ENCODE measurements at regions of chr19 and their contacts with region 1.

Region 1: GRCh38 chr19:55632463-55632834 is 8.1 kb upstream of the ZNF784 start:
- DNase-seq: peak; percentile 88
- ATAC-seq: peak; percentile 63
- H3K4me3 ChIP-seq: no peak overlapping the region
- H3K27ac ChIP-seq: no peak overlapping the region
- H3K4me1 ChIP-seq: peaks cover 38% of the 10 kb centered on the region
- H3K27me3 ChIP-seq: no peaks in the 10 kb centered on the region; a peak in 1 of 5 replicates
- CTCF ChIP-seq: peak; percentile 85
- EP300 ChIP-seq: no peak
- POLR2A ChIP-seq: no peak
- RAD21 ChIP-seq: no peak; the same call in 1 of the 2 replicates

Region 2: DNA sequence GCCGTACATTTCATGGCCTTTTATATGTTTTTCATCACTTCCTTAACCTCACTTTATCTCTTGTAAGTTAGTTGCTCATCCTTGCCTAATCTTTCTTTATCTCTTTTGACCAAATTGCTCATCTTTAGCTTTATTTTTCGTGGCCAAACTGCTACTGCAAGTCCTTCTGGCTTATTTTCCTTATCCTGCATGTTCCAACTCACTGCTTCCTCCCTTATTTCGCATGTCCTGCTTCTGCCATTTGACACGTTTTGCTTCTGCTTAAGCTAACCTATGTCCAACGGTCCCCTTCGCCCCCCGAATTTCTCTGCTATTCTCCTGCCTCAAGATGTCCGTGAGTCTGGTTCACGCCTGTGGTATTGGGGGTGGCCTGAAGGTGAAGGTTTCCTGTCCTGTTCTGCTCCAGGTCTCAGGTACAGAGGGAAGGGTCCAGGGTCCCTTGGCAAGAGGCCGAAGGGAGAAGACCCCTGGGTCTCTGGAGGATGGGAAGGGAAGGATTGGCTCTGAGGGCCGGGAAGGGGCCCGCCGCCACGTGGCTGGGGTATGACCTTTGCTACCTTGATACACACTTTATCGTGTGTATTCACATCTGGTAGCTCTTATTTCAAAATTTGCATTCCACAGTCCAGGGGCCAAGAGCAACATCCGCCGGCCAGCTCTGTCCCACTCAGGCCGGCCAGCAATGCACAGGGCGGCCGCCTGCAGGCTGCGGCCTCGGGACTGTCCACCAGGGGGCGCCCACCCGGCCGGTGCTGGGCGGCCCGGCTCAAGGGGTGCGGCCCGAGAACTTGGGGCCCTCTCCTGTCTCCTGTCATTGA is 165.0 kb before region 1 on chr19:
- CTCF ChIA-PET with region 1: no interaction called
- POLR2A ChIA-PET with region 1: no interaction called
- in situ Hi-C with region 1: no loop called
- intact Hi-C with region 1: loop called (anchors 1 kb)
- DNase-seq: peak; percentile 69
- ATAC-seq: peak; percentile 89
- H3K4me3 ChIP-seq: peak overlapping the region in 1 of 3 experiments; percentile 44; a peak in 1 of 6 replicates
- H3K27ac ChIP-seq: peak overlapping the region; percentile 52
- H3K4me1 ChIP-seq: peaks cover 52% of the 10 kb centered on the region
- H3K27me3 ChIP-seq: no peaks in the 10 kb centered on the region; a peak in 1 of 5 replicates
- CTCF ChIP-seq: peak; percentile 88
- EP300 ChIP-seq: peak in 1 of 2 experiments; percentile 12; a peak in 1 of 4 replicates
- POLR2A ChIP-seq: no peak
- RAD21 ChIP-seq: peak; percentile 79

Region 3: DNA sequence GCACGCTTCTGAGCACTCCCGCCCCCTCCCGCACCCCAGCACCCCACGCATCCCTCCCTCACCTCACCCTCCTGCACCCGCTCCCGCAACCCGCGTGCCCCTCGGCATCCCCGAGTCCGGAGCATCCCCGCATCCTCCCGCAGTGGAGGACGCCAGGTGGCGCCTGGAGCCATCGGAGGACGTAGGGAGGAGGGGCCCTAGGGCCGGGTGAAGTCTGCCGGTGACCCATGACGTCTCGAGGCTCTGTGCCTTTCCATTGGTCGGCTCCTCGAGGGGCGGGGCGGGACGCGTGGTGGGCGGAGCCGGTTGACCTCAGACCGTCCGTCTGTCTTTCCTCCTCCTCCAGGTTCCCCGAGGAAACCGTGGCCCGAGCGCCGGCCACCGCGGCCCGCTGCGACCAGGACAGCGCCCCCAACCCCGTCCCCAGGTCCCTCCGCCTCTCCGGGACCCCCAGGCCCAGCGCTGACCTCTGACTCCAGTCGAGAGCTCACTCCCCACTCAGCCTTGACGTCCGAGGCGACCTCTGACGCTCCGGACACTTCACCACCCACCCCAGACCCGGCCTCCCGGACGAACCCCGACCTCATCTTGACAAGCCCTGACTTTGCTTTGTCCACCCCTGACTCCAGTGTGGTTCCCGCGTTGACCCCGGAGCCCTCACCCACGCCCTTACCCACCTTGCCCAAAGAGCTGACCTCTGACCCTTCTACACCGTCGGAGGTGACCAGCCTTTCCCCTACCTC is 115.4 kb before region 1 on chr19:
- CTCF ChIA-PET with region 1: interaction called, 37 read pairs
- POLR2A ChIA-PET with region 1: no interaction called
- in situ Hi-C with region 1: no loop called
- intact Hi-C with region 1: loop called (anchors 1 kb)
- DNase-seq: peak; percentile 78
- ATAC-seq: peak; percentile 97
- H3K4me3 ChIP-seq: peak overlapping the region; percentile 47 to 79 (median 68)
- H3K27ac ChIP-seq: no peak overlapping the region
- H3K4me1 ChIP-seq: peaks cover 4% of the 10 kb centered on the region; the same call in 1 of the 2 replicates
- H3K27me3 ChIP-seq: peaks cover 0 to 22% of the 10 kb centered on the region in 2 experiments; a peak in 4 of 5 replicates
- CTCF ChIP-seq: peak; percentile 100
- EP300 ChIP-seq: no peak
- POLR2A ChIP-seq: peak in 1 of 2 experiments; percentile 46; a peak in 1 of 4 replicates
- RAD21 ChIP-seq: peak; percentile 98

Region 4: DNA sequence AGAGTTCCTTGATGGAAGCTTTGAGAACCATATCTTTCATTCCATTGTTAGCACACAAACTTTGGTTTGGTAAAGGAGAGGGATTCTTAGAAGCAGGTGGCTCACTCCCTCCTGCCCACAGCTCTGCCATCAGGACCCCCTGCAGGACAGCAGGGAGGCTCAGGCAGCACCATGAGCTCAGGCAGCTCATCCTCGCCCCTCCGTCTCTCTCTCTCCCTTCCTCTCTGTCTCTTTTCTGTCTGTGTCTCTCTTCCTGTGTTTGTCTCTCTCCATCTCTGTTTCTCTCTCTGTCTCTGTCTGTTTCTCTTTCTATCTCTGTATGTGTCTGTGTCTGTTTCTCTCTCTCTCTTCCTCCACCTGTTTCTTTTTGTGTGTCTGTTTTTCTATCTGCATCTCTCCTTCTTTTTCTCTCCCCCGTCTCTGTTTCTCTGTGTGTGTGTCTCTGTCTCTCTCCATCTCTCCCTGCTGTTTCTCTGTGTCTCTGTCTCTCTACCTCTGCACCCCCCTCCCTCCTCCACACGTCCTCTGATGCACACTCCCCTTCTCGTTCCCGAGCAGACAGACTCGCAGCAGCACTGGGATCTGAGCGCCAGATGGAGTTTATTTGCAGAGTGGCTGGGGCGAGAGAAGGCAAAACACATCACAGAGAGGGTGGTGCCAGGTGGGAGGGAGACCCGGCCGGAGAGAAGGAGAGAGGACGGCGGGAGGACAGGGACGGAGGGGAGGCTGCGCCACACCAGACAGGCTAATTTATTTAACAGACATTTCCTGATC is 104.2 kb before region 1 on chr19:
- CTCF ChIA-PET with region 1: no interaction called
- POLR2A ChIA-PET with region 1: no interaction called
- in situ Hi-C with region 1: no loop called
- intact Hi-C with region 1: no loop called
- DNase-seq: peak; percentile 30
- ATAC-seq: peak; percentile 59
- H3K4me3 ChIP-seq: no peak overlapping the region
- H3K27ac ChIP-seq: no peak overlapping the region
- H3K4me1 ChIP-seq: peaks cover 33% of the 10 kb centered on the region
- H3K27me3 ChIP-seq: no peaks in the 10 kb centered on the region
- CTCF ChIP-seq: peak; percentile 43; the same call in 1 of the 2 replicates
- EP300 ChIP-seq: no peak
- POLR2A ChIP-seq: no peak
- RAD21 ChIP-seq: no peak

Region 5: GRCh38 chr19:55586976-55587668 is 45.3 kb before region 1 on chr19:
- CTCF ChIA-PET with region 1: no interaction called
- POLR2A ChIA-PET with region 1: no interaction called
- in situ Hi-C with region 1: no loop called
- intact Hi-C with region 1: loop called (anchors 10 kb)
- DNase-seq: peak; percentile 93
- ATAC-seq: peak; percentile 86
- H3K4me3 ChIP-seq: peak overlapping the region; percentile 25 to 88 (median 51)
- H3K27ac ChIP-seq: peak overlapping the region; percentile 41
- H3K4me1 ChIP-seq: peaks cover 34% of the 10 kb centered on the region
- H3K27me3 ChIP-seq: no peaks in the 10 kb centered on the region; a peak in 1 of 5 replicates
- CTCF ChIP-seq: no peak
- EP300 ChIP-seq: no peak
- POLR2A ChIP-seq: no peak
- RAD21 ChIP-seq: no peak

Region 6: DNA sequence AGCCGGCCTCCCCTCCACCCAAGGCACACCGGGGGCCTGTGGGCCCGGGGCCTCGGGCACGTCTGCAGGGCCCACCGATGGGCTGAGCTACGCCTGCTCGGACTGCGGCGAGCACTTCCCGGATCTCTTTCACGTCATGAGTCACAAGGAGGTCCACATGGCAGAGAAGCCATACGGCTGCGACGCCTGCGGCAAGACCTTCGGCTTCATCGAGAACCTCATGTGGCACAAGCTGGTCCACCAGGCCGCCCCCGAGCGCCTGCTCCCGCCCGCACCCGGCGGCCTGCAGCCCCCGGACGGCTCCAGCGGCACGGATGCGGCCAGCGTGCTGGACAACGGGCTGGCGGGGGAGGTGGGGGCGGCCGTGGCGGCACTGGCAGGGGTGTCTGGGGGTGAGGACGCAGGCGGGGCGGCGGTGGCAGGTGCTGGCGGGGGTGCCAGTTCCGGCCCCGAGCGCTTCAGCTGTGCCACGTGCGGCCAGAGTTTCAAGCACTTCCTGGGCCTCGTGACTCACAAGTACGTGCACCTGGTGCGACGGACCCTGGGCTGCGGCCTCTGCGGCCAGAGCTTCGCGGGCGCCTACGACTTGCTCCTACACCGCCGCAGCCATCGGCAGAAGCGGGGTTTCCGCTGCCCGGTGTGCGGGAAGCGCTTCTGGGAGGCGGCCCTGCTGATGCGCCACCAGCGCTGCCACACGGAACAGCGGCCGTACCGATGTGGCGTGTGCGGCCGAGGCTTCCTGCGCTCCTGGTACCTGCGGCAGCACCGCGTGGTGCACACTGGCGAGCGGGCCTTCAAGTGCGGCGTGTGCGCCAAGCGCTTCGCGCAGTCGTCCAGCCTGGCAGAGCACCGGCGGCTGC is 16.7 kb before region 1 on chr19:
- CTCF ChIA-PET with region 1: no interaction called
- POLR2A ChIA-PET with region 1: no interaction called
- in situ Hi-C with region 1: no loop called
- intact Hi-C with region 1: no loop called
- DNase-seq: no peak
- ATAC-seq: no peak
- H3K4me3 ChIP-seq: no peak overlapping the region
- H3K27ac ChIP-seq: no peak overlapping the region
- H3K4me1 ChIP-seq: peaks cover 8% of the 10 kb centered on the region
- H3K27me3 ChIP-seq: no peaks in the 10 kb centered on the region
- CTCF ChIP-seq: no peak
- EP300 ChIP-seq: no peak
- POLR2A ChIP-seq: no peak
- RAD21 ChIP-seq: no peak

Region 7: DNA sequence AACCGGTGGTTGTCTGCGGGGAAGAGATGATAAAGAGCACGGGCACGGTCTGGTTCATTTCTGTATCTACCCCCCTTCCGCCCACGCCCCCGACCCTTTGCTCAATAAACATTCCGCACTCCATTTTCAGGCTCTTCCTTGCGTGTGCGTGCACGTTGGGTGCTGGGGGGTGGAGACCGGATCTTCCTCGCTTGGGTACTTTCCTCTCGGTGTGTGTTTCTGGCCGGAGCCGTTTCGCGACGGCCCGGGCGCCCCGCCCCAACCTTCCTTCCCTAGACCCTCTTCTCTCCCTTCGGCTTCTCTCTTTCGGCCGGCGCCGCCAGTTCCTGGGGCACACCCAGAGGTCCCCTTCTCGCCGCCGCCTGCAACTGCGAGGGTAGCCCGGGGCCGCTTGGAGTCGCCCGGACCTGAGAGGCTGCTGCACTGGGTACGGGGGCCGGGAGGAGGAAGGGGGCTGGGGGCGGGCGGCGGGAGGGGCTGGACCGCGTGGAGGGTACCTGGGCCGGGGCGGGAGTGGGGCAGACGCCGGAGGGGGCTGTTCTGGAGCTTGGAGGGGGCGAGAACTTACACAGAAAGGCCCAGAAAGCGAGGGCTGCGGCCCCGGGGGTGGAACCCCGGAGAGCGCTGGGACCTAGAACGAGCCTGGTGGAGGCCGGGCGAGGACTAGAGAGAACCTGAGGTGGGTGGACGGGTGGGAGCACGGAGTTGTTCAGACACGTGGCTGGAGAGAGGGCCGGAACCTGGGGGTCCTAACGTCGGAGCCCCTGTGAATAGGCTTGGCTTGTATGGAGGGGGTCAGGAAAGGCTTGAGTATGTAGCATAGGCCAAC is 11.1 kb after region 1 on chr19 and contains the start of gene ZNF581:
- CTCF ChIA-PET with region 1: interaction called, 4 read pairs
- POLR2A ChIA-PET with region 1: interaction called, 12 read pairs
- in situ Hi-C with region 1: no loop called
- intact Hi-C with region 1: no loop called
- DNase-seq: peak; percentile 57
- ATAC-seq: peak; percentile 47
- H3K4me3 ChIP-seq: peak within 1 kb of the TSS; percentile 92 to 96 (median 92)
- H3K27ac ChIP-seq: peak within 1 kb of the TSS; percentile 79
- H3K4me1 ChIP-seq: peaks cover 59% of the 10 kb centered on the region
- H3K27me3 ChIP-seq: no peaks in the 10 kb centered on the region; a peak in 1 of 5 replicates
- CTCF ChIP-seq: no peak
- EP300 ChIP-seq: no peak
- POLR2A ChIP-seq: no peak; a peak in 2 of 4 replicates
- RAD21 ChIP-seq: no peak
- total RNA-seq, gene ZNF581: 18.4 and 19.6 TPM in 2 replicates

Region 8: GRCh38 chr19:55653758-55654539 is 21.5 kb after region 1 on chr19:
- CTCF ChIA-PET with region 1: interaction called, 21 read pairs
- POLR2A ChIA-PET with region 1: interaction called, 15 read pairs
- in situ Hi-C with region 1: no loop called
- intact Hi-C with region 1: no loop called
- DNase-seq: peak; percentile 99
- ATAC-seq: peak; percentile 85
- H3K4me3 ChIP-seq: peak overlapping the region; percentile 85 to 99 (median 97)
- H3K27ac ChIP-seq: peak overlapping the region; percentile 99
- H3K4me1 ChIP-seq: peaks cover 30% of the 10 kb centered on the region
- H3K27me3 ChIP-seq: no peaks in the 10 kb centered on the region; a peak in 1 of 5 replicates
- CTCF ChIP-seq: peak; percentile 99
- EP300 ChIP-seq: 0 out of 4 replicates have a peak, but pooled peaks of 1 of the 2 experiments have one; percentile 35
- POLR2A ChIP-seq: peak; percentile 54 to 80; a peak in 3 of 4 replicates
- RAD21 ChIP-seq: peak; percentile 79

Region 9: GRCh38 chr19:55809381-55810058 is 177.1 kb after region 1 on chr19:
- CTCF ChIA-PET with region 1: interaction called, 4 read pairs
- POLR2A ChIA-PET with region 1: no interaction called
- in situ Hi-C with region 1: no loop called
- intact Hi-C with region 1: loop called (anchors 5 kb)
- DNase-seq: peak; percentile 65
- ATAC-seq: peak; percentile 77
- H3K4me3 ChIP-seq: no peak overlapping the region
- H3K27ac ChIP-seq: no peak overlapping the region
- H3K4me1 ChIP-seq: peaks cover 4% of the 10 kb centered on the region; the same call in 1 of the 2 replicates
- H3K27me3 ChIP-seq: peaks cover 0 to 13% of the 10 kb centered on the region in 2 experiments; a peak in 2 of 5 replicates
- CTCF ChIP-seq: peak; percentile 69
- EP300 ChIP-seq: no peak
- POLR2A ChIP-seq: no peak
- RAD21 ChIP-seq: peak; percentile 38; the same call in 1 of the 2 replicates